ENCODE measurements at regions of chr11 and their contacts with region 1.

Region 1: GRCh38 chr11:3412837-3413236 is 33.9 kb upstream of the ZNF195 start:
- DNase-seq: no peak
- H3K4me3 ChIP-seq: no peak overlapping the region
- H3K27ac ChIP-seq: no peak overlapping the region
- H3K27me3 ChIP-seq: no peaks in the 10 kb centered on the region
- CTCF ChIP-seq: no peak

Region 2: GRCh38 chr11:3341298-3341697 is 71.5 kb before region 1 on chr11:
- intact Hi-C with region 1: loop called in 1 of 2 experiments (anchors 10 kb)
- DNase-seq: peak in 4 of 10 donors; percentile 8 to 51 (median 28)
- H3K4me3 ChIP-seq: no peak overlapping the region
- H3K27ac ChIP-seq: no peak overlapping the region
- H3K27me3 ChIP-seq: peaks cover 0 to 16% (median 0%) of the 10 kb centered on the region in 45 donors
- CTCF ChIP-seq: peak; percentile 31 to 82 (median 67)

Region 3: GRCh38 chr11:3685923-3686322 is 273.1 kb after region 1 on chr11:
- intact Hi-C with region 1: no loop called
- DNase-seq: no peak
- H3K4me3 ChIP-seq: no peak overlapping the region
- H3K27ac ChIP-seq: no peak overlapping the region
- H3K27me3 ChIP-seq: no peaks in the 10 kb centered on the region
- CTCF ChIP-seq: no peak